ENCODE measurements at regions of chr1 and their contacts with region 1.

Region 1: DNA sequence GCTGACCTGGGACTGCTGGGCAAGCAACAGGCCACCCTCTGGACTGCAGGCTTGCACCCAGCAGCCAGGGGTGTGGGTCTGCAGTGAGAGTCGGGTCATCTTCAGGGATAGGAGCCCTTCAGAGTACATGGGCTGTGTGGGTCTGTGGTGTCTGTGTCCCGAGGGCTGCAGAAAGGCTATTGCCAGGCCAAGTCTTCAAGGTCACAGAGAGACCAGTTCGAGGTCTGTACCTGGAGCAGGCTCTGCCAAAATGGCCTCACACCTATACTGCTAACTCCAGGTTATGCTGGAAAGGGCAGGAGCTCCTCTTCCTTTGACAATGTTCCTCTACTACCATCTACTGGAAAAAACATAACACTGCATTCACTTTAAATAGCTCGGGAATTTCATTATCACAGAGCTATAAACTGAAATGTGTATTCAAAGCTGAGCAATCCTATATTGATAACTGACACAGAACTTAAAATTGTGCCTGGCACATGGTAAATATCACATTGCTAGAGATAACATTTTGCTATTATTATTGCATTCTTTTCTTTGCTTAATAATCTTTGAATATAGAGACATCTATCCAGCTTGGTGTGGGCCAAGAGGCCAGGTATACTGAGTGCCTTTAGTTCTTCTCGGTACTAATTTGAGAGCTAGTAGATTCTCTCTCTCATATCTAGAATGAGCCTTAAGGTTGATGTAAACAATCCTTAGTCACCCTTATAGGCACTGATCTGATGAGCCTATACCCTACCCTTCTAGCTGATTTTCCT is 6.9 kb upstream of the DNAH14 start:
- DNase-seq: peak; percentile 24
- H3K4me3 ChIP-seq: no peak overlapping the region
- H3K27ac ChIP-seq: no peak overlapping the region
- H3K4me1 ChIP-seq: no peaks in the 10 kb centered on the region
- H3K27me3 ChIP-seq: peaks cover 0 to 4% of the 10 kb centered on the region in 2 experiments
- CTCF ChIP-seq: peak; percentile 44 to 45
- POLR2A ChIP-seq: no peak

Region 2: DNA sequence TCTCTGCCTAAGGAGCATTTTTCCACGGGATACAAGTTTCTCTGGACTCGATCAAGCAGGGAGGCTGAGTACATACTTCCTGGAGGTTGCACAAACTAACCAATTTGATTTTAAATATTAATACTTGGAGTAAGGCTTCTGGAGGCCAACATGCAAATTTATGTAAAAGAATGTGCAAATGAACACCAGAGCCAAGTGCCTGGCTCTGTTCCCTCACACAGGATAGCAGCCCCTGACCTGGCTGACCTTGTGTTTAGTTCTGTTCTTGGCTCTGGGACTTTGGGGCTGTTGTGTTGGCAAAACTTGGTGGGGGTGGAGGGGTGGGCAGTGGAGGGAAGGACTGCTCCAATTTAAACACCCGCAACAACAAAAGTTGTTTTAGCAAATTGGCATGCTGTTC is 272.3 kb before region 1 on chr1:
- CTCF ChIA-PET with region 1: interaction called, 3 read pairs
- POLR2A ChIA-PET with region 1: no interaction called
- dilution Hi-C with region 1: no loop called
- intact Hi-C with region 1: loop called (anchors 10 kb)
- DNase-seq: no peak
- H3K4me3 ChIP-seq: no peak overlapping the region
- H3K27ac ChIP-seq: no peak overlapping the region
- H3K4me1 ChIP-seq: peaks cover 11% of the 10 kb centered on the region
- H3K27me3 ChIP-seq: no peaks in the 10 kb centered on the region
- CTCF ChIP-seq: no peak
- POLR2A ChIP-seq: no peak

Region 3: DNA sequence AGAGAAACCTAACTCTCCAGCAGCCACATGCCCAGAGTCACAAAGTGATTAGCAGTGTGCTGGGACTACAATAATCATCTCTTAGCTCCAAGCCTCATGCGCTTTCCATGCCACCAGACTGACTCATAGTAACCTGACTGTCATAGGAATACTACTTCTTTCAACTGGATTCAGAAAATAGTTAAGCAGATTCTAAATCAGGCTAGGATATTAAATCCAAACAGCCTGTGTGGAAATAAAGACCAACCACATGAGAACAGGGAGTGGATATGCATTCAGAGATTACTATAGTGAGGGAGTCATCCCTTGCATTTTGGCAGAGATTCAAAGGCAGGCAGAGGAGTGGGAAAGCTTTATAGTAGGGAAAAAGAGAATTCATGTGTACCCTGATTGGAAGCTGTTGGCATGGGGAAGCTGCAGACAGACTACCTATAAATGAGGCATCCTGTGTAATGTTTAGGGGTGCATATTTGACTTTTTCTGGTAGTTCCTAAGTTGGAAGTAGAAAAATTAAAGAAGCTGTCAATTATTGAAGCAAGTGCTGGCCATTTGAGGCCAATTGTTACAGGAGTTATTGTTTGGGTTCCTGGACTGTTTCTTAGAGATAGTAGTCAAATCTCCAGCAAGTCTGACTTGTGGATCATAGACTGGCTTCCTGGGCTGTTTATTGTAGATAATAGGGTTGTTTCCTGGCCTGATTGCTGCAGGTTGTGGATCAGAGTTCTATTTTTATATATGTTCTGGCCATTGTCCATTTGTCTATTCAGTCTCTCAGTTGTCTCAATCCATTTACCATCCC is 24.9 kb before region 1 on chr1:
- CTCF ChIA-PET with region 1: interaction called, 11 read pairs
- POLR2A ChIA-PET with region 1: no interaction called
- dilution Hi-C with region 1: no loop called
- intact Hi-C with region 1: no loop called
- DNase-seq: no peak
- H3K4me3 ChIP-seq: no peak overlapping the region
- H3K27ac ChIP-seq: no peak overlapping the region
- H3K4me1 ChIP-seq: no peaks in the 10 kb centered on the region
- H3K27me3 ChIP-seq: peaks cover 0 to 2% of the 10 kb centered on the region in 2 experiments
- CTCF ChIP-seq: no peak
- POLR2A ChIP-seq: no peak

Region 4: DNA sequence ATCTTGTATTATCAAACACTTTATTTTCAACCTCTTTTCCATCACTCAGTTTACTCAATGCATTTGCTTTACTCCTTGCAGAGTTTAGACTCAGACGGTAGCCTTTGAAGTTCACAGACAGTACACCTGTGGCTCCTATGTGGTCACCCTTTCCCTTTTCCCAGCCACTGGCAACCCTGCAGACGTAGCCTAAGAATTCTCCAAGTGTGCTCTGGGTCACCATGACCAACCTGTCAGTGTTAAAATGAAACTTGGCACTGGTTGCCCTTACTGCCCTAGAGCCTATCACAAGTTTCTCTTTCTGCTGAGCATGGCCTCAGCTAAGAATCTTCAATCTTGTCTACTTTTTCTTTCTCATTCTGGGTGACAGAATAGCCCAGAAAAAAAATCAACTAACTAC is 18.6 kb before region 1 on chr1:
- CTCF ChIA-PET with region 1: interaction called, 11 read pairs
- POLR2A ChIA-PET with region 1: no interaction called
- dilution Hi-C with region 1: no loop called
- intact Hi-C with region 1: no loop called
- DNase-seq: no peak
- H3K4me3 ChIP-seq: no peak overlapping the region
- H3K27ac ChIP-seq: no peak overlapping the region
- H3K4me1 ChIP-seq: no peaks in the 10 kb centered on the region
- H3K27me3 ChIP-seq: peaks cover 0 to 2% of the 10 kb centered on the region in 2 experiments
- CTCF ChIP-seq: no peak
- POLR2A ChIP-seq: no peak